ENCODE measurements at regions of chrX and their contacts with region 1.

Region 1: DNA sequence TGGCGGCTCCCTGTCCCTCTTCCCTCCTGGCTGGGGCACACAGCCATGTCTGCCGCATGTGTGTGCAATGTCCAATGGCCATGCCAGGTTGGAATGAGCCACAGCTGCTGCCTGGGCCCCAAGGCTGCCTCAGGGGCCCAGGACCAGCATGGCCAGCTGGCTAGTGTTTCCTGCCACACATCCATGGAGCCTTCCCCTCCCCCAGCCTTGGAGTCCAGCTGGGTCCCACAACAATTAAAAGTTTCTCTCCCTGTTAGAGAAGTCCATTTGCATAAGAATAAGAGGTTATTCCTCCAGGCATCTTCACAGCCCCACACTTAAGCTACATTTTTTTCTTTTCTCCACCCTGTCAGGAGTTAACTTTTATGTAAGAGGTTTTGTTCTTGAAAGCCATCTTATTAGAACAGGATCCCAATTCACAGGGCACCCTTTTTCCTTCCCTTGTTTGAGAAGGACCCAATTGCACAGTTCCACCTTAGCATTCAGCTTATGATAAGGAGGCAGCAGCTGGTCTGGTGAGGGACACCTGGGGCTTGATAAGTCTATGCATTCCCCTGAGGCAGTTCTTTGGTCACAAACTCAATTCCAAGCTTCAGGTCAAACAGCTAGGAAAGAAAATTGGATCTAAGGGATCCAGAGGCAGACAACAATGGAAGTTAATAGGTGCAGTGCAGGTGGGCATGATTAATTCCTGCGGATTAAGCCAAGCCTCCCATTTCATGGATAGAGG is 963.3 kb upstream of the GRIA3 start:
- DNase-seq: peak in 1 of 2 experiments; percentile 73
- H3K4me3 ChIP-seq: peak overlapping the region; percentile 15 to 64 (median 40); a peak in 6 of 8 replicates
- H3K27ac ChIP-seq: peak overlapping the region; percentile 67; the same call in 1 of the 2 replicates
- H3K4me1 ChIP-seq: peaks cover 0 to 14% (median 5%) of the 10 kb centered on the region in 4 experiments
- H3K27me3 ChIP-seq: no peaks in the 10 kb centered on the region
- CTCF ChIP-seq: no peak
- EP300 ChIP-seq: peak in 1 of 2 experiments; percentile 57; a peak in 1 of 3 replicates
- POLR2A ChIP-seq: no peak
- RAD21 ChIP-seq: no peak

Region 2: DNA sequence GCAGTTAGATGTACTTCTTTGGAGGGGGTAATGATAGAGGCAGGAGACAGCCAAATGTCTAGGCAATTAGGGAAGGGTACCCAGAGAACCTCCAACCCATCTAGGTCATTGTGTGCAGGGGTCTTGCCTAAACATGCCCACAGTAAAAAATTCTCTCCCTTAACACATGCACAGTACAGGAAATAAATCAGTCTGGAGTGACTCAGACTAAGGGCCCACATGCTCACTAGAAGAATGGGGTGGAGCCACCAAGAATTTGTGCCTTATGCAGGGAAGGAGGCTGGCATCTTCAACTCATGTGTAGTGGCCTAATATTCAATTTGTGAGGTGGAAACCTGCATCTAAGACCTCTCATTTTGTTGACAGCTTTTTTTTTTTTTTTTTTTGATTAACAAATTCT is 18.0 kb after region 1 on chrX:
- CTCF ChIA-PET with region 1: no interaction called
- POLR2A ChIA-PET with region 1: interaction called, 17 read pairs
- DNase-seq: no peak
- H3K4me3 ChIP-seq: no peak overlapping the region
- H3K27ac ChIP-seq: no peak overlapping the region
- H3K4me1 ChIP-seq: no peaks in the 10 kb centered on the region; a peak in 1 of 7 replicates
- H3K27me3 ChIP-seq: no peaks in the 10 kb centered on the region
- CTCF ChIP-seq: no peak
- EP300 ChIP-seq: no peak
- POLR2A ChIP-seq: no peak; a peak in 1 of 3 replicates
- RAD21 ChIP-seq: no peak

Region 3: DNA sequence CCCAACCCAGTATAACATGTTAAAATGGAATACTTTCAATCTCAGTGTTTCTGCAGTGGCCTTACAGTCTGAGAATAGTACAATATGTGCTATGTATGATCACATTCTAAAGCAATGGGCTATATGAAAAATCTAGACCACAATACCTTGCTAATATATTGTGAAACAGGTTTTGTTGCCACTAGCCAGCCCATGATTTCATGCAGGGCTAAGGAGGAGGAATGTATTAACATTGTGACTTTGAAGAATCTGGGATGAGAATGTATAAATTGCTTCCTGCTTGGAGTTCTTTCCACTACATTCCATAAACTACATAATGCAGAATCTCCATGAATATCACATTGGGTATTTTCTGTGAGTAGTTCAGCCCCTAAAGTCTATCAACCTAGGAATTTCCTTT is 27.9 kb after region 1 on chrX:
- CTCF ChIA-PET with region 1: no interaction called
- POLR2A ChIA-PET with region 1: interaction called, 17 read pairs
- DNase-seq: no peak
- H3K4me3 ChIP-seq: no peak overlapping the region
- H3K27ac ChIP-seq: no peak overlapping the region
- H3K4me1 ChIP-seq: no peaks in the 10 kb centered on the region; a peak in 1 of 7 replicates
- H3K27me3 ChIP-seq: no peaks in the 10 kb centered on the region
- CTCF ChIP-seq: no peak
- EP300 ChIP-seq: no peak
- POLR2A ChIP-seq: no peak
- RAD21 ChIP-seq: no peak

Measured in H1 (cell line).